ENCODE measurements at regions of chr1 and their contacts with region 1.

Region 1: DNA sequence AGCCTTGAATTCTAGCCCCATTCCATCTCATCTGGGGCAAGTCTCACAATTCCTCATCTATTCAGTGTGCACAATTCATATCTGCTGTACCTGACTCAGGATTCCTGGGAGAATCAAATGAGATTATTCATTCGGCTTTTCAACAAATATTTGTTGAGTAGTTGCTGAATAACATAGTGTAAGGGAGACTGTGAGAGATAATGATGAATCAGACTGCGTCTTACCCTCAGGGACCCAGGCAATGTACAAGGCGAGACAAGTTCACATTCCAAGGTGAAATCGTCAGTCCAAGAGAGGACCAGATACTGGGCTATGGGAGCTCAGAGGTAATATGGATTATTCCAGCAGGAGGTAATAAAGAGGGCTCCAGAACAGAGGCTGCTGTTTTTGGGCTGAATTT is 67.8 kb upstream of the SMYD2 start:
- DNase-seq: peak; percentile 52 to 84
- ATAC-seq: peak; percentile 94 to 95
- H3K4me3 ChIP-seq: no peak overlapping the region
- H3K27ac ChIP-seq: peak overlapping the region; percentile 74
- H3K4me1 ChIP-seq: peaks cover 52% of the 10 kb centered on the region
- CTCF ChIP-seq: no peak
- EP300 ChIP-seq: peak in 1 of 2 experiments; percentile 36; a peak in 1 of 5 replicates
- POLR2A ChIP-seq: no peak
- RAD21 ChIP-seq: no peak

Region 2: DNA sequence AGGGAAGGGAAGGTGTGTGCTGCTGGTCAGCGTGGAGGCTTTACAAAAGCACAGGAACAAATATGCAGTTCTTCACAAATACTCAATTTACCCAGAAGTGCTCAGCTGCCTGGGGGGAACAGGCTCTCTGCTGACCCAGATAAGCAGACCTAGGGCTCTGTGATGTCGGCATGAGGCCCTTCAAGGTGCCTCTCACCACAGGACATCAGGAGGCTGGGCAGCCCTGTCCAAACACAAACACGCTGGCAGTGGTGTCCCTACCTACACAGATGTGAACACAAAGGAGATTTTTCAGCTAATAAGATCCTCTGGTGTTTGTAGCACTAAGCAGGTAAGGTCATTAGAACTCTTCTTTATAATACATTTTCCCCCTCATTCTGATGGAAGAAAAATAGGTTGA is 468.4 kb before region 1 on chr1:
- CTCF ChIA-PET with region 1: no interaction called
- POLR2A ChIA-PET with region 1: no interaction called
- DNase-seq: no peak
- ATAC-seq: no peak
- H3K4me3 ChIP-seq: no peak overlapping the region
- H3K27ac ChIP-seq: no peak overlapping the region
- H3K4me1 ChIP-seq: no peaks in the 10 kb centered on the region
- CTCF ChIP-seq: no peak
- EP300 ChIP-seq: no peak
- POLR2A ChIP-seq: no peak
- RAD21 ChIP-seq: no peak

Region 3: DNA sequence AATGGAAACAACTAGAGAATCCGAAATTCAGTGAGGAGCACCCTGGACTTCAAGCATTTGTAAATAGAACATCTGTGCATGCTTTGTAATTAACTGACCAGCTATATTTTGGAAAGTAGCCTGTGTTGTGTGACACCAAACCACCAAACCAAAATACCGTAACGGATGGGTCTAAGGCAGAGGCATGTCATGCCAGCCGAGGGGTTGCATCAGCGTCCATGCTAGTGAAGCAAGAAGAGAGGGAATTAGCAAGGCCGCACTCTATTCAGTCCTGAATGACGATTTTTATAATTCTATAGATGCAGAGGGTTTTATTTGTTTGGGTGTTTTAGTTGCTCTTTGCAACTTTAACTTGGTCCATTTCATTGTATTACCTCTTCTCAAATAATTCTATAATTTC is 49.0 kb before region 1 on chr1:
- CTCF ChIA-PET with region 1: no interaction called
- POLR2A ChIA-PET with region 1: no interaction called
- DNase-seq: no peak
- ATAC-seq: no peak
- H3K4me3 ChIP-seq: no peak overlapping the region
- H3K27ac ChIP-seq: no peak overlapping the region
- H3K4me1 ChIP-seq: no peaks in the 10 kb centered on the region
- CTCF ChIP-seq: no peak
- EP300 ChIP-seq: no peak
- POLR2A ChIP-seq: no peak
- RAD21 ChIP-seq: no peak

Region 4: DNA sequence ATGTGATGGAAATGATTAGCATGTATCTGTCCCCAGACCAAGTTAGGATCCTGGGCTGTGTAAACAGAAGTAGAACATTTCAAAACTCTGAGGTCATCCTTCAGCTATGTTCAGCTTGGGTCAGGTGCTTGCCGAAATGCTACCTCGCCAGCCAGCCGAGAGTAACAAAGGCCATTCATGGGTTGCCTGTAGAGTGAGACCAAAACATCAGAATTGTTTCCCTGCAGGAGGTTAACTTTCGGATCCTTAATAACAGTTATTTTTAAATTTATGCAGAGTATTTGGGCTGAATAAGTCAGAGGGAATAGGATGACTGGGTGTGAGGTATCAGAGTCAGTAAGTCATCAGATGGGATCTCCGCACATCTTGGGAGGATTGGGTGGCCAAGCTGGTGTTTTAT is 103.5 kb after region 1 on chr1:
- CTCF ChIA-PET with region 1: interaction called, 18 read pairs
- POLR2A ChIA-PET with region 1: no interaction called
- DNase-seq: no peak
- ATAC-seq: no peak
- H3K4me3 ChIP-seq: no peak overlapping the region
- H3K27ac ChIP-seq: no peak overlapping the region
- H3K4me1 ChIP-seq: peaks cover 8% of the 10 kb centered on the region; the same call in 2 of the 3 replicates
- CTCF ChIP-seq: no peak
- EP300 ChIP-seq: no peak
- POLR2A ChIP-seq: no peak
- RAD21 ChIP-seq: no peak

Region 5: DNA sequence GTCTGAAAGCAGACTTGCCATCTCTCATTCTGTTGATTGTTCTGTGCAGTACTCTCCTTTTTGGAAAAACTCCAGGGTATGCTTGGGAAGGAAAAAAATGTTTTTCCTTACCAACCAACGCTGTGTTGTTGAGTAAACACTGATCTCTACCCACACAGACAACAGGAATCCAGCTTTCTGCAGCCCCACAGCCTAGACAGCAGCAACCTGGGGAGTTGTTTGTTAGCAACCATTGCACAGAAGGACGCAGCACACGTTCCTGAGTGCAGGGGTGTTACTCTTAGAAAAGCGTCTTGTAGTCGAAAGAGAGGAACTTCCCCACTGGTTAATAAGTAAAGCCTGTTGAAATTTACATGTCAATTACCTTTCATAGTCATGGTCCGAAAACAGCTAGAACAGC is 124.4 kb after region 1 on chr1:
- CTCF ChIA-PET with region 1: interaction called, 324 read pairs
- POLR2A ChIA-PET with region 1: no interaction called
- DNase-seq: peak in 1 of 2 experiments; percentile 23
- ATAC-seq: no peak
- H3K4me3 ChIP-seq: no peak overlapping the region
- H3K27ac ChIP-seq: no peak overlapping the region
- H3K4me1 ChIP-seq: no peaks in the 10 kb centered on the region
- CTCF ChIP-seq: no peak
- EP300 ChIP-seq: no peak
- POLR2A ChIP-seq: no peak
- RAD21 ChIP-seq: no peak

Region 6: DNA sequence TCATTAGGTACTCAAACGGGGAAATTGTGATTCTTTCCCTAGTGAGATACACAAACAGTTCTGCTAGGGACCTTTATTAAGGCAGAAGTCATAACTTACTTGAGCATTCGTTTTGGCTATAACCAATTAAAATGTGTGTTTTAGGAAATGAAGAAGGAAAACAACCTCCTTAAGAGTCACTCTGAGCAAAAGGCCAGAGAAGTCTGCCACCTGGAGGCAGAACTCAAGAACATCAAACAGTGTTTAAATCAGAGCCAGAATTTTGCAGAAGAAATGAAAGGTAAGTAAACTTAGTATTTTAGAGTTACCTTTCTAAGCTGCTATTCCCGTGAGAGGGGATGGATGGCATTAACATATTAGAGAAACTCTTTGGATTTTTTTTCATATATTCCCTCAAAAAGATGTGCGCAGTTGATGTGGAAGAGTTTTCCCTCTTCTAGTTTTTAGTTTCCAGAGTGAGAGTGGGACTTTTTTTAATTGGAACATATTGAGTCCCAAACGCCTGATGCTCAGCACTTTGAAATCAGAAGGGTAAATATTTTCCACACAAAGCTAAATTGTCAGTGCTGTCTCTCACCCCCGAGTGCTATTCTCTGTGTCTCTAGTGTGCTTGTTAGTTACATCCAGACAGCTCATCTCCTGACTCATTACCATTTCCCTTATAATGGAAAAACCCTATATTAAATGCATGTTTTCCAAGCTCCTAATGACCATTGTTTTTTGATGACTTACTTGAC is 424.8 kb after region 1 on chr1:
- CTCF ChIA-PET with region 1: interaction called, 41 read pairs
- POLR2A ChIA-PET with region 1: no interaction called
- DNase-seq: peak; percentile 43 to 58
- ATAC-seq: peak; percentile 72 to 84; a peak in 4 of 6 replicates
- H3K4me3 ChIP-seq: no peak overlapping the region
- H3K27ac ChIP-seq: no peak overlapping the region
- H3K4me1 ChIP-seq: no peaks in the 10 kb centered on the region
- CTCF ChIP-seq: peak; percentile 78
- EP300 ChIP-seq: no peak
- POLR2A ChIP-seq: no peak
- RAD21 ChIP-seq: peak; percentile 58 to 61